Right ventricle myocardium inferior (tissue), 1 donor: ENCODE measurements at regions of chr12 and their contacts with region 1.

Region 1: GRCh38 chr12:94101738-94102660 is 46.4 kb upstream of the PLXNC1 start:
- DNase-seq: peak; percentile 94
- ATAC-seq: peak; percentile 91

Region 2: DNA sequence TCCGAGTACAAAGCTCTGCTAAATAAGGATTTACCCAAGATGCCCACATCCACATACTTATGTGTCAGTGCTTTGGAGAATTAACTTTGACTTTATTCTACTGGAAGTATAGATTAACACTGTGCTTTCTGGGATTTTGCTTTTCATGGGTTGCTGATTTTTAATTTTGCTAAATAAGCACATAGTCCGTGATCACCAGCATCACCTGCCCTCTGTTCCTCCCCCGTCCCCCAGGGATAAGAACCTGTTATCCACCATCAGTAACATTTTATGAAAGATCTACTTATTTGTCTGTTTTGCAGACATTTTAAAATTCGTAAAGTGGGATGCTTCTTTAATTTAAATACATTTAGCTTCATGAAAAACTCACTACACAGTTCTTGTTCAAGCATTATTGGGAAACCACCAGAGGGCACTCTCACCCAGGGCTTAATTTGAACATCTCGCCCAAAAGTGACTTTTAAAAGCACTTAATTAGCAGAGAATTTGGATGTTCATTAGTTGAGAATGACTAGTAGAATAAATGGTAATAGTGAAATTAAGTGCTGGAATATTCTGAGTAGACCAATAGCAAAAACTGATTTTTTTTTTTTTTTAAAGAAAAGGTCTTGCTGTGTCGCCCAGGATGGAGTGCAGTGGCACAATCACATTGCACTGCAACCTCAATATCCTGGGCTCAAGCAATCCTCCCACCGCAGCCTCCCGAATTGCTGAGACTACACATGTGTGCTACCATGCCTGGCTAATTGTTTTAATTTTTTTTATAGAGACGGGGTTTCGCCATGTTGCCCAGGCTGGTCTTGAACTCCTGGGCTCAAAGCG is 599.0 kb before region 1 on chr12:
- intact Hi-C with region 1: loop called (anchors 2 kb)
- DNase-seq: no peak
- ATAC-seq: no peak

Region 3: DNA sequence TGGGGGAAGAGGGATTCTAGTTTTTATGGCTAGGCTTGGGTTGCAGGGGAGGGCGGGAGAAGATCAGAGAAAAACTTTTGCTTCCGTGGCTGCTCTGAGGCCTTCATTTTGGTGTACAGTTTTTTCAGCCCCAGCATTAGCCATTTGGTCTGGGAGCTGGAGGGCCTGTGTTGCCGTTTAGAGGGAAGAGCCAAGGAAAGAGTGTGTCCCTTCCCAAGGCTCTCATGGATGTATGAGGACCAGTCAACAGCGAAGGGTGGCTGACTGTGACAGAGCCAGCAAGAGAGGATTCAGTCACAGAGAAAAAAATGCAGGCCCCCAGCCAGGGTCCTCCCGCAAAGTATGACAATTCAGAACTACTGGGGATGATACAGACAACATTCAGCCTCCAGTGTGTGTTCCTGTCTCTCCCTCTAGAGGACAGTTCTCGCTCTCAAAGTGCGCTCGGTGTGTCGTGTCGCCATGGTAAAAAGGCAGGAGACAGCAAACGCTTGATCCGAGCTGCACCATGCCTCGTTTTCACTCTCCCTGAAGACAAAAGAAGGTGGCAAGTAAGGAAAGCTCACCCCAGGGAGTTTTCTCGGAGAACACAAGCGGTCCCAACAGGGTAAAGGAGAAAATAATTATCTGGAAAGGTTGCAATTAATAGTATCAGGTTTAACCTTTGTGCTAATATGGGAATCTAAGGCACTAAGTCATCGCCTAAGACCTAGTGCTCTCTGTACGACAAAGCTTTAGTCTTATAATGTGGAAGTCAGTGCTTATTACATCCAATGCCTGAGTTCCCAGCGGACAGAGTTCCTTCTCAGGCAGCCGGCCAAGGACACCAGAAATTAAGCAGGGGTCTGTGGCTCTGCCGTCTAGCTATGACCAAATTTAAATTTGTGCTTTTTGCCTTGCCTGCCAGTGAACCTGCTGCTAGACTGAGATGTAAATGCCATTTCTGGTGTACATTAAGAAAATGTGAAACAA is 110.9 kb before region 1 on chr12:
- intact Hi-C with region 1: loop called (anchors 5 kb)
- DNase-seq: no peak
- ATAC-seq: peak; percentile 93